BJ (cell line): ENCODE measurements at regions of chr17 and their contacts with region 1.

Region 1: DNA sequence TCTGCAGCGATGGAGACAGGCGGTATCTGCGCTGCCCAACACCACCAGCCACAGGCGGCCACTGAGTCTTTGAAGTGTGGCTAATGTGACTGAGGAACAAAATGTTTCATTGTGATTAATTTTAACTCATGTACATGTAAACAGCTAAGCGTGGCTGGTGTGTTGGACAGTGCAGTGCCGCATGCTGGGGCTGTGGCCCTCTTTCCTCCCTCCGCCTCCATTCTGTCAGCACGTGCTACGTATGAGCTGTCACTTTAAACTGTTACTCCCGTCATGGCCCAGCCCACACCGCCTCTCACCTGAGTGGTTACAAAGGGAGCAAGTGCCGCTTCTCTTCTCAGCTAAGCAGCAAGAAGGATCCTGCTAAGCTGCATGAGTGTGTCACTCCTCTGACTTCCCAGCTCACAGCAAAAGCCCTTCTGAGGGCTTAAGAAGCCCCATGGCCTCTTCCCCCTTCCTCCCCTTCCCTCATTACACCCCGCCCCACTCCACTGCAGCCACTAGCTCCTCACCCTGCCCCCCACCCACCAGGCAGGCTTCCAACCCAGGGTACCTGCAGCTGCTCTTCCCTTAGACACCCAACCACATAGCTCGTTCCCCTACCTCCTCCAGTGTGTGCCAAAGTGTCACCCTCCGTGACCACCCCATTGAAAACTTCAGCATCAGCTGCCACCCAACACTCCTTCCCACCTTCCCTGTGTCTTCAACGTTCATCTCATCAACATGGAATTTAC is 15.0 kb downstream of the HASPIN start:
- DNase-seq: no peak
- H3K4me3 ChIP-seq: no peak overlapping the region
- H3K27me3 ChIP-seq: no peaks in the 10 kb centered on the region
- CTCF ChIP-seq: no peak

Region 2: GRCh38 chr17:3710951-3711383 is 27.8 kb before region 1 on chr17:
- CTCF ChIA-PET with region 1: no interaction called
- POLR2A ChIA-PET with region 1: no interaction called
- DNase-seq: no peak
- H3K4me3 ChIP-seq: no peak overlapping the region
- H3K27me3 ChIP-seq: no peaks in the 10 kb centered on the region
- CTCF ChIP-seq: no peak

Region 3: GRCh38 chr17:3750926-3751325 is 12.2 kb after region 1 on chr17:
- CTCF ChIA-PET with region 1: interaction called, 20 read pairs
- POLR2A ChIA-PET with region 1: no interaction called
- DNase-seq: no peak
- H3K4me3 ChIP-seq: no peak overlapping the region
- H3K27me3 ChIP-seq: peaks cover 1% of the 10 kb centered on the region; the same call in 1 of the 2 replicates
- CTCF ChIP-seq: no peak

Region 4: DNA sequence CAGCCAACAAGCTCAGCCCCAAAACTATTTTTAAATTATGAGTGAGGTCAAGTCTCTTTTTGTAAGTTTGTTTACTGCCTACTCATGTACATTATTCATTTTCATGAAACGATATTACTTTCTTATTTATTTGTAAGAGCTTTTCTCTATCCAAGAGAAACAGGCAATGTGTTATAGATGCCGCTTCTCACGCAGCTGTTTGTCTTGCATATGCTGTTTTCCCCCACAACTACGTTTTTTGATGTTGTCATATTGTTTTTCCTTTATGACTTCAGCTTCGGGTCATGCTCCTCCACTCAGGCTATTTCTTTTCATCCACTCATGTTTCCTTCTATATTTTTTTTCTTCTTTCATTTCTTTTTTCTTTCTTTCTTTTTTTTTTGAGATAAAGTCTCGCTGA is 42.3 kb after region 1 on chr17:
- CTCF ChIA-PET with region 1: interaction called, 11 read pairs
- POLR2A ChIA-PET with region 1: no interaction called
- DNase-seq: no peak
- H3K4me3 ChIP-seq: no peak overlapping the region
- H3K27me3 ChIP-seq: no peaks in the 10 kb centered on the region; the same call in 1 of the 2 replicates
- CTCF ChIP-seq: no peak

Region 5: DNA sequence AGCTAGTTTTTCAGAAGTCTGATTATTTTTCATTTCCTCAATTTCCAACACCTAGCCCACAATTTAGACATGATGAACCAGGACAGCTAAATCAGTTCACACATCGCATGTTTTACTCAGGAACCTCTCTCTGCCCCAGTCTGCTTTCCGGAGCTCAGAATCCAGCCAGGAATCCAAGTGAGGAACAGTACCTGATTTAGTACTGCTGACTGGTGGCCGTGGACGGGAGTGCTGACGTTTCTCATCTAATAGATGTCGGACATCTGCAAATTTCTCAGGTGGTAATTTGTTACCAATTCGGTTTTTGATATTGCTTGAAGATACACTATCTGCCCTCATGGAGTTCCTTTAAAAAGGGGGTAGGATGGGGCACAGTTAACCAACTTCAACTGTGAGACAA is 77.2 kb after region 1 on chr17:
- CTCF ChIA-PET with region 1: interaction called, 56 read pairs
- POLR2A ChIA-PET with region 1: no interaction called
- DNase-seq: no peak
- H3K4me3 ChIP-seq: no peak overlapping the region
- H3K27me3 ChIP-seq: no peaks in the 10 kb centered on the region
- CTCF ChIP-seq: no peak

Region 6: DNA sequence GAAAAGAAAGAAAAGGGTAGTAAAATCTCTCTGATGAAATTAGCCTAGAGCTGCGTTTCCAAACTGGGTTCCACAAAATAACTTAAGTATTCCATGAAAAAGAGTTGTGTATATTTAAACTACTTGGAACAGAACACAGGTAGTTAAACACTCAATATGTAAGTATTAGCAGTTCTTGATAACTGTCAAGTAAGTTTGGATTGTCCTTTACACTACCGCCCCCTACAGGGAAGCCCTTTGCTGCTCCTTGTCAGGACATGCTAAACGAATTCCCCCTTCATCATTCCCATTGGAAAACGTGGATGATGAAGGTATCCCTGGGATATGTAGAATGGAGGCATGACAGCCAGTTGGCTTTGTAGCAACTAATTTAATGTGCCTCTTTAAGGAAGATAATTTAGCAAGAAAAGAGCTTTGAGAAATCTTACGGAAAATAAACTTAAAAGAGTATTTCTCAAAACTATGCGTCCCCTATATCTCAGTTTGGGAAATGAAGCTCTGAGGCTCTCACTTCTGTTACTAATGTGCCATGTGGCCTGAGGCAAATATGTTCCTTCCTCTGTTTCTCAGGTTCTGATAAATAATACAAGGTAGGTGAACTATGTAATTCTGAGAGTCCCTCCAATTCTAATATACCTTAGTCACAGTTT is 88.5 kb after region 1 on chr17:
- CTCF ChIA-PET with region 1: interaction called, 160 read pairs
- POLR2A ChIA-PET with region 1: no interaction called
- DNase-seq: no peak
- H3K4me3 ChIP-seq: no peak overlapping the region
- H3K27me3 ChIP-seq: no peaks in the 10 kb centered on the region
- CTCF ChIP-seq: peak; percentile 70

Region 7: DNA sequence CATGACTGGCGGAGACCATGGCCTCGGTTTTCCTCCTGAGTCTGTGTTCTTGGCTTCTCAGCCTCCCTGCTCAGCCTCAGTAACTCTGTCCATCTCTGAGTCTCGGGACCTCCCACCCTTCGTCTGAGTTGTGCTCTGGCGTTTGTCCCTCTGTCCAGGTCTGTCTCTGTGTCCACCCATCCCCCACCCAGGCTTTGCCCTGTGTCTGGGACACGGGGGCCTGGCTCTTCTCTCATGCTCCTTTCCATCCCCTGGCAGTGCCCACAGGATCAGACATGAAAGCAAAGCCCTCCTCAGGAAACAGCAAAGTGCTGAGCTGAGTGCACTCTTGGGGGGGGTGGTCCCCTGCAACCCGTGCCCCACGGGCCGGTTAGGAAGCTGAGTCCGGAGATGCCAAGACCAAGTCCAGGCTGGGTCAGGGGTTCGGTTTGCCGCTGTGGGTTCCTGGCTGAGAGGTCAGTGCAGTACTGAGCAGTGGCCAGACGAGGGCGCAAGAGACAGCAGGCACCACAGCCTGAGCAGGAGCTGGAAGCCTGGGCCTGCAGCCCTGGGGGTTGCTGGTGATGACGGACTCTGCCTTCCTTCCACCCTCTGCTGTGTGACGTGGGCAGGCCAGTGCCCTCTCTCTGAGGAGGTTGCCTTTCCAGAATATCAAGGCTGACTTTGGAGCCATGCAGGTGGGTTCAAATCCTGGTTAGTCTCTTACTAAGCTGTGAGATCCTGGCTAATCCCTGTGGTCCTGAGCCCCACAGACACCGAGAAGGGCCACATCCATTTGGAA is 175.0 kb after region 1 on chr17:
- CTCF ChIA-PET with region 1: interaction called, 13 read pairs
- POLR2A ChIA-PET with region 1: no interaction called
- DNase-seq: no peak
- H3K4me3 ChIP-seq: no peak overlapping the region
- H3K27me3 ChIP-seq: no peaks in the 10 kb centered on the region
- CTCF ChIP-seq: peak; percentile 99